Dendritic cell treated with granulocyte-macrophage colony-stimulating factor and Interleukin-4, amounts not matched to agents 40 ng/mL and 50 ng/mL, for 4 days (primary cell): ENCODE measurements at regions of chr2 and their contacts with region 1.

Region 1: DNA sequence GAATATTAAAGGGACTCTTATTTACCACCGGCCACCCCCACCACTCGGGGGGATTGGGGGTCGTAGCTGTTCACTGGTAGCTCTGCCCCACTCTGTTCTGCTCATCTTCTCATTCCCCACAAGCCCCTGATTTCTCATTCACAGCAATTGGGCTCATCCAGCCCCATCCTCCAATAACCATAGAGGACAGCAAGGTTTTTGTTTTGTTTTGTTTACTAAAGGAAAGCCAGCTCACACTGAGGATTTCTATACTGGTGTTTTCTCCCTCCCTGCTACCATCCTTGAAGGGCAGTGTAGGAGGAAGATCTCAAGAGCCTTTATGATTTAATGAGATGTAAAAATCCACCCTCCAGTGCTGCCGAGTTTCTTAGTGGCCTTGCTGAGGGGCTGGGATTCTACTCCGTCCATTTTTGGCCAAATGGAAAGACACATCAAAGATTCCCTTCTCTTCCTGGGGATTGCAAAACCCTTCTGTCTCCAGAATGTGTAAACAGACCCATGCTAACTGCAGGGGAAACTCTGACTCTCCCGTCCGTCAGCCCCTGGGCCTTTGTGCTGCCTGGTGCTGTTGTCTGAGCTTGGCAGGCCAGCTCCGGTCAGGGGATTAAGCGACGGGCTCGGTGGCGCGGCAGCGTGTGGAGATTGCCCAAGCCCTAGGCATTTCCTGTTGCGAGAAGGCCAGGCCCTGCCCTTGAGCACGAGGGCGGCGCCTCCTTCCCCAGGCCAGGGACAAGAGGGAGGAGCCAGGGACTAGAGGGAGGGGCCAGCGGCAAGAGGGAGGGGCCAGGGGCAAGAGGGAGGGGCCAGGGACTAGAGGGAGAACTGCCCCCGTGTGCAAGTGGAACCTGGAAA is 165.0 kb downstream of the ANTXR1 start:
- H3K4me3 Mint-ChIP-seq: peak overlapping the region; percentile 68
- H3K27ac Mint-ChIP-seq: peak overlapping the region; percentile 93
- H3K4me1 Mint-ChIP-seq: peaks cover 36% of the 10 kb centered on the region
- H3K27me3 Mint-ChIP-seq: peaks cover 3% of the 10 kb centered on the region

Region 2: GRCh38 chr2:69082430-69082997 is 95.5 kb before region 1 on chr2:
- intact Hi-C with region 1: loop called (anchors 5 kb)
- H3K4me3 Mint-ChIP-seq: peak overlapping the region; percentile 40
- H3K27ac Mint-ChIP-seq: peak overlapping the region; percentile 87
- H3K4me1 Mint-ChIP-seq: peaks cover 69% of the 10 kb centered on the region
- H3K27me3 Mint-ChIP-seq: peaks cover under 1% of the 10 kb centered on the region

Region 3: GRCh38 chr2:69163109-69163508 is 14.9 kb before region 1 on chr2:
- intact Hi-C with region 1: loop called (anchors 1 kb)
- H3K4me3 Mint-ChIP-seq: peak overlapping the region; percentile 37
- H3K27ac Mint-ChIP-seq: peak overlapping the region; percentile 45
- H3K4me1 Mint-ChIP-seq: peaks cover 68% of the 10 kb centered on the region
- H3K27me3 Mint-ChIP-seq: peaks cover 14% of the 10 kb centered on the region